Dorsolateral prefrontal cortex (tissue), 120 donors: ENCODE measurements at regions of chr1 and their contacts with region 1.

Region 1: GRCh38 chr1:16613185-16614147 is at the start of gene NBPF1:
- DNase-seq: peak; percentile 93 to 100 (median 98)
- H3K4me3 ChIP-seq: peak within 1 kb of the TSS; percentile 62 to 97 (median 74)
- H3K27ac ChIP-seq: peak within 1 kb of the TSS; percentile 17 to 92 (median 82)
- H3K27me3 ChIP-seq: no peaks in the 10 kb centered on the region
- CTCF ChIP-seq: peak in 49 of 56 donors; percentile 3 to 75 (median 45)
- total RNA-seq, gene NBPF1: 17.9 to 89.3 (median 52.9) TPM

Region 2: DNA sequence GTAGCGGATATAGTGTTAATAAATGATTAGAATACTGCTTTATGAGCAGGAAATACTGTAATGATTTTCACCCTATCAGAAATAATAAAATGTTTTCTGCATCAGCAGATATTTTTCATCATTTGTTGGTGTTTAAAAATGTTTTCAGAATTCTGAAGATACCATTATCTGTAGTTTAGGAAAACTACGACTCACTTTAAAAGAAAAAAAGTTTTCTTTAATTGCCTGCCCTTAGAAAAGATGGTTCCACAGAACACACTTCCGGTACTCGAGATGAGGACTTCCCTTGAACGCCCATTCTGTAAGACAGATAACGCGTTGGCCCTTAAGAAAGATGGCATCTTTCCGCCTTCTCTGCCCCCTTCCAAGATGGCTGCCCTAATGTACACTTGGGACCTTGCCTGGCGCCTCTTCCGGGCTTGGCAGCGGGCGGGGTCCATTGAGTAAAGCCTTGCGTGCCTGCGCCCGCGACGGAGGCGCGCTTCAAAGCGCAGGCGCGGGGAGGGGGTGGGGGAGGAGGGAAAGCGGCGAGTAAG is 246.7 kb before region 1 on chr1 and contains the start of gene SZRD1:
- intact Hi-C with region 1: no loop called
- DNase-seq: peak; percentile 92 to 99 (median 96)
- H3K4me3 ChIP-seq: peak within 1 kb of the TSS; percentile 52 to 98 (median 90)
- H3K27ac ChIP-seq: peak within 1 kb of the TSS; percentile 80 to 100 (median 99)
- H3K27me3 ChIP-seq: no peaks in the 10 kb centered on the region
- CTCF ChIP-seq: peak in 4 of 56 donors; percentile 4 to 35 (median 9)
- total RNA-seq, gene SZRD1: 33.3 to 89.5 (median 49.3) TPM

Region 3: GRCh38 chr1:16396591-16396990 is 216.9 kb before region 1 on chr1:
- intact Hi-C with region 1: no loop called
- DNase-seq: peak in 5 of 10 donors; percentile 22 to 57 (median 41)
- H3K4me3 ChIP-seq: no peak overlapping the region
- H3K27ac ChIP-seq: peak overlapping the region in 24 of 59 donors; percentile 1 to 69 (median 28)
- H3K27me3 ChIP-seq: no peaks in the 10 kb centered on the region
- CTCF ChIP-seq: no peak

Region 4: DNA sequence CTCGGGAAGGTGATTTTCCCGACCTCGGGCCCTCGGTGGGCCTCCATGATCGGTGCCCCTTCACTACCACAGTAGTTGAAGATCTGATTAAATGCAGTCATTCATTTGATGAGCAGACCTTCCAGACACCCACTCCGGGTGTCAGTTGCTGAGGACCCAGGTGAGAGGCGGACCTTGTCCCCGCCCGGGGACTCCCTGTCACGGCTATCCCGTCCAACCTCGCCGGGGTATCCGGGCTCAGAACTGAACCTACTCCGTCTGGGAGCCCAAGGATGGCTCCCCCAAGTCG is 30.7 kb after region 1 on chr1:
- intact Hi-C with region 1: loop called in 1 of 2 experiments (anchors 2 kb)
- DNase-seq: no peak
- H3K4me3 ChIP-seq: peak overlapping the region; percentile 61 to 100 (median 82)
- H3K27ac ChIP-seq: peak overlapping the region; percentile 1 to 99 (median 88)
- H3K27me3 ChIP-seq: peaks cover 0 to 9% (median 0%) of the 10 kb centered on the region in 45 donors
- CTCF ChIP-seq: no peak

Region 5: GRCh38 chr1:16888860-16889816 is 275.7 kb after region 1 on chr1:
- intact Hi-C with region 1: loop called in 1 of 2 experiments (anchors 5 kb)
- DNase-seq: peak; percentile 58 to 95 (median 80)
- H3K4me3 ChIP-seq: peak overlapping the region; percentile 37 to 98 (median 68)
- H3K27ac ChIP-seq: peak overlapping the region; percentile 27 to 98 (median 89)
- H3K27me3 ChIP-seq: peaks cover 0 to 3% (median 0%) of the 10 kb centered on the region in 45 donors
- CTCF ChIP-seq: peak in 44 of 56 donors; percentile 8 to 61 (median 36)

Region 6: DNA sequence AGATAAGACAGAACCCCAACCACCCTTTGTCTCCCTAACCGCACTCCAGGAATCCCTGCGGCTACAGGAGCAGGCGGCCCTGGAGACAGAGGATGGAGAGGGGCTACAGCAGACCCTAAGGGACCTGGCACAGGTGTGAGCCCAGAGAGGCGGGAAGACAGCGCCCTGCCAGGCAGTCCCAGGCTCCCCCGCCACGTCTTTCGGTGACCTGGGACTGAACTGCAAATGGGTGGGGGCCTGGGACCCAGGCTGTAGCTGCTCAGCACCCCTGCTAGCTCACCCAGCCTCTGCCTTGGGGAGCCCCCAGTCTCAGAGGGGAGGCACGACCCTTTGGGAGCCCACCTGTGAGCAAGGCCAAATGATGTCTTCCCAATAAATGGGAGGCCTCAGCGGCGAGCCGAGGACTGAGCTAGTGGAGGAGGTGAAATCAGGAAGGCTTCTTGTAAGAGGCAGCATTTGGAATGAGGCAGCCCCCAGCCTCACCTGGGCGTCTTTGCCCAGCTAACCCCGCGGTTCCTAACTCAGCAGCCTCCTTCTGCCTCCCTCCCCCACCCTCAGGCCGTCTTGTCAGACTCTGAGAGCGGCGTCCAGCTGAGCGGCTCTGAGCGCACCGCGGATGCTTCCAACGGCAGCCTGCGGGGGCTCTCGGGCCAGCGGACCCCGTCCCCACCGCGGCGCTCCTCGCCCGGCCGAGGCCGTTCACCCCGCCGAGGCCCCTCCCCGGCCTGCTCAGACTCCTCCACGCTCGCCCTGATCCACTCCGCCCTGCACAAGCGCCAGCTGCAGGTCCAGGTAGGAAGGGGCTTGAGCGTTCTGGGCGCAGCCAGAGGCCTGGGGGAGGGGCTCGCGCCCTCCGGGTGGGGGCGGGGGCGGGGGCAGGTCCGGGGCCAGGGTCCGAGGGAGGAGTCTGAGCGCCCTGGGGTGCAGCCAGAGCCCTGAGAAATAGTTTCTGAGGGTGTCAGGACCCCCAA is 325.2 kb after region 1 on chr1:
- intact Hi-C with region 1: no loop called
- DNase-seq: no peak
- H3K4me3 ChIP-seq: no peak overlapping the region
- H3K27ac ChIP-seq: no peak overlapping the region
- H3K27me3 ChIP-seq: no peaks in the 10 kb centered on the region
- CTCF ChIP-seq: no peak